Activated CD8-positive, alpha-beta T cell treated with anti-CD3 and anti-CD28 coated beads, Interleukin-2, amount 10 ng/mL, durations not matched to agents 7 days and 5 days (primary cell): ENCODE measurements at regions of chr13 and their contacts with region 1.

Region 1: GRCh38 chr13:95834134-95834765 is 157.3 kb downstream of the DNAJC3 start:
- DNase-seq: peak; percentile 71
- ATAC-seq: peak; percentile 53
- H3K4me3 Mint-ChIP-seq: no peak overlapping the region
- H3K27ac Mint-ChIP-seq: no peak overlapping the region
- H3K4me1 Mint-ChIP-seq: no peaks in the 10 kb centered on the region
- H3K27me3 Mint-ChIP-seq: peaks cover 14% of the 10 kb centered on the region

Region 2: GRCh38 chr13:95536632-95537241 is 297.5 kb before region 1 on chr13:
- CTCF ChIA-PET with region 1: interaction called, 53 read pairs
- POLR2A ChIA-PET with region 1: no interaction called
- DNase-seq: no peak
- ATAC-seq: no peak
- H3K4me3 Mint-ChIP-seq: no peak overlapping the region
- H3K27ac Mint-ChIP-seq: no peak overlapping the region
- H3K4me1 Mint-ChIP-seq: no peaks in the 10 kb centered on the region
- H3K27me3 Mint-ChIP-seq: peaks cover 27% of the 10 kb centered on the region

Region 3: DNA sequence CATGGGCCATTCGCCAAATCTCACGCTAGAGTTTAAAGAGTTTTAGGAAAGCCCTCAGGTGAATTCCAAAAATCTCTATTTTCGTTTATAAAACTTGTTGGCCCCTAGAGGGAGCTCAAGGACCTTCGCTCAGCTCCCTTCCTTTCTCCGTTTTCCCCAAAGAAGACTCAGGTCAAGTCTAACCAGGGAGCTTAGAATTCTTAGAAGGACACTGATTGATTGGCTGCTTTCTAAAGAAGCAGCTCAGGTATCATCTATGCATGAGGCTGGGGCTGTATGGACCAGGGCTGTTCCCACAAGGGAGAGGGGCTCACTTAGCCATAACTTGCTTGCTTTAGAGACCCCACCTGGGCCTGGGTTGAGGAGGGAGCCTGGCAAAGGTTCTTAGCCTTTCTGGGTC is 210.2 kb before region 1 on chr13:
- CTCF ChIA-PET with region 1: interaction called, 118 read pairs
- POLR2A ChIA-PET with region 1: interaction called, 3 read pairs
- DNase-seq: peak; percentile 41
- ATAC-seq: no peak
- H3K4me3 Mint-ChIP-seq: no peak overlapping the region
- H3K27ac Mint-ChIP-seq: no peak overlapping the region
- H3K4me1 Mint-ChIP-seq: no peaks in the 10 kb centered on the region
- H3K27me3 Mint-ChIP-seq: peaks cover 21% of the 10 kb centered on the region

Region 4: GRCh38 chr13:95660981-95661581 is 173.2 kb before region 1 on chr13:
- CTCF ChIA-PET with region 1: interaction called, 13 read pairs
- POLR2A ChIA-PET with region 1: no interaction called
- DNase-seq: peak; percentile 44
- ATAC-seq: no peak
- H3K4me3 Mint-ChIP-seq: no peak overlapping the region
- H3K27ac Mint-ChIP-seq: no peak overlapping the region
- H3K4me1 Mint-ChIP-seq: no peaks in the 10 kb centered on the region
- H3K27me3 Mint-ChIP-seq: peaks cover 21% of the 10 kb centered on the region

Region 5: DNA sequence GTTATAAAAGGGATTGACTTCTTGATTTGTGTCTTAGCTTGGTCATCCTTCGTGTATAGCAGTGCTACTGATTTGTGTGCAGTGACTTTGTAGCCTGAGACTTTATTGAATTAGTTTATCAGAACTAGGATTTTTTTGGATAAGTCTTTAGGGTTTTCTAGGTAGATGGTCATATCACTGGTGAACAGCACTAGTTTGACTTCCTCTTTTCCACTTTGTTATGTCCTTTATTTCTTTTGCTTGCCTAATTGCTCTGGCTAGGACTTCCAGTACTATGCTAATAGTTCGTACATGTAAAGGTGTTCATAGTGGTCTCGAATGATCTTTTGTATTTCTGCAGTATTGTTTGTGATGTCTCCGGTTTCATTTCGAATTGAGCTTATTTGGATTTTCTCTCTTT is 11.9 kb before region 1 on chr13:
- CTCF ChIA-PET with region 1: interaction called, 16 read pairs
- POLR2A ChIA-PET with region 1: no interaction called
- DNase-seq: no peak
- ATAC-seq: no peak
- H3K4me3 Mint-ChIP-seq: no peak overlapping the region
- H3K27ac Mint-ChIP-seq: no peak overlapping the region
- H3K4me1 Mint-ChIP-seq: no peaks in the 10 kb centered on the region
- H3K27me3 Mint-ChIP-seq: peaks cover 24% of the 10 kb centered on the region

Region 6: DNA sequence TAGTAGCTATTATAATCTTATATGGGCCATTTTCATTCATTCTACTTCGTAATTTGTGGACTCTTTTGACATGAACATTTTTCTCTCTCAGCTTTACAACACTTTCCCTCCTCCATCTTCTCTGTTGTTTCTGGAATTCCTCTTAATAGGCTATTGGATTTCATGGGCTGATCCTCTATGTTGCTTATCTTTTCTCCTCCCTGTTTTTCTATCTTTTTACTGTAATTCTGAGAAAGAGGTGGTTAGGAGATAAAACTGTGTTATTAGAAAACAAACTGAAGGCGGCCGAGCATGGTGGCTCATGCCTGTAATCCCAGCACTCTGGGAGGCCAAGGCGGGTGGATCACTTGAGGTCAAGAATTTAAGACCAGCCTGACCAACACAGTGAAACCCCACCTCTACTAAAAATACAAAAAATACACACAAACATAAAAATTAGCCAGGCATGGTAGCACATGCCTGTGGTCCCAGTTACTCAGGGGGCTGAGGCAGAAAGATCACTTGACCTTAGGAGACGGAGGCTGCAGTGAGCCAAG is 30.9 kb after region 1 on chr13:
- CTCF ChIA-PET with region 1: no interaction called
- POLR2A ChIA-PET with region 1: no interaction called
- DNase-seq: no peak
- ATAC-seq: no peak
- H3K4me3 Mint-ChIP-seq: no peak overlapping the region
- H3K27ac Mint-ChIP-seq: no peak overlapping the region
- H3K4me1 Mint-ChIP-seq: no peaks in the 10 kb centered on the region
- H3K27me3 Mint-ChIP-seq: peaks cover 2% of the 10 kb centered on the region